ENCODE measurements at regions of chr7 and their contacts with region 1.

Region 1: GRCh38 chr7:71131256-71132126 is 453 bp upstream of the GALNT17 start:
- DNase-seq: no peak
- H3K4me3 Mint-ChIP-seq: no peak overlapping the region
- H3K27ac Mint-ChIP-seq: no peak overlapping the region
- H3K4me1 Mint-ChIP-seq: no peaks in the 10 kb centered on the region
- H3K27me3 Mint-ChIP-seq: no peaks in the 10 kb centered on the region
- CTCF ChIP-seq: no peak

Region 2: GRCh38 chr7:71377469-71377868 is 246.0 kb after region 1 on chr7:
- CTCF ChIA-PET with region 1: no interaction called
- intact Hi-C with region 1: loop called (anchors 10 kb)
- DNase-seq: no peak
- H3K4me3 Mint-ChIP-seq: no peak overlapping the region
- H3K27ac Mint-ChIP-seq: no peak overlapping the region
- H3K4me1 Mint-ChIP-seq: no peaks in the 10 kb centered on the region
- H3K27me3 Mint-ChIP-seq: no peaks in the 10 kb centered on the region
- CTCF ChIP-seq: no peak